CD4-positive, alpha-beta T cell (primary cell): ENCODE measurements at regions of chr16 and their contacts with region 1.

Region 1: DNA sequence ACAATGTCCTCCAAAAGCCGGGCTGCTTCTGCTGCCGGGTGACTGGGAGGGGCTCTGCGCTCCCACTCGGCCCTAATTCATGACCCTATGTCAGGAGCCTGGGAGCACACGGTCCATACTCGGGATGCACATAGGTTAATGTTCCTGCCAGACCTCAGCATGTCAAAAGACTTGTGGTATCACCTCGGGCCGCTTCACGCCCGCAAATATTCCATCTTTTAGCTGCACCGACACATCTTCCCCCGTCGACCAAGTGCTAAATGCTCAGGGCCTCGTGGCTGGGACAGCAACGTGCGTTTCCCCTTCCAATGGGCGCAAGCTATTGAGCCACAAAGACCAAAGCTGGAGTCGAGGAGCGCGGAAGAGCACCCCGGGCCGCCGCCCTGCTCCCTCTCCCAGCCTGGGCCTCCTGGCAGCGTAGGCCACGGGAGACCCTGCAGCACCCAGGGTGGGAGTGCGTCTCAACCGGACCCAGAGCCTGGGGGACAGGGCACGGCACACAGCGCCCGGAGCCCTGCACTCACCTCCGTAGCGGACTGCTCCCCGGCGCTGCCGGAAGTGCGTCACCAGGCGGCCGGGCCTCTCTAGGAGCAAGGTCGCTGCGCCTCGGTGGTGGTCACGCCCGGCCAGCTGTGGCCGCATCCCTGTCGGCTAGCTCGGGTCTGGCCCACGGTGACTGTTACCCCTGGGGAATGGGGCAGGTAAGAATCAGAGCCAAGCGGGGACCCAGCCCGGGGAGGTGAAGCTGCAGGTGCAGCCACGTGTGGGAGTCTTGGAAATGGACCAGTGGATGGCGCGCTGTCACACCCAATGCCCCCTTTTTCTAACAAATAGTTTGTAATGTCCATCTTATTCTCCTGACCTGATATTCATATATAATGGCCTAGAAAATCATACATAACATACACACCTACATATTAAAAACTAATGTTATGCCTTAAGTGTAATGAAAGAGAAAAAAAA is at the start of gene ZNF23:
- DNase-seq: peak; percentile 53 to 87 (median 72)
- ATAC-seq: peak; percentile 95
- H3K4me3 ChIP-seq: peak within 1 kb of the TSS; percentile 96
- H3K4me3 Mint-ChIP-seq: peak within 1 kb of the TSS; percentile 94
- H3K27ac ChIP-seq: peak within 1 kb of the TSS; percentile 68 to 79
- H3K27ac Mint-ChIP-seq: peak within 1 kb of the TSS; percentile 85
- H3K4me1 ChIP-seq: peaks cover 11% of the 10 kb centered on the region
- H3K4me1 Mint-ChIP-seq: peaks cover 34% of the 10 kb centered on the region
- H3K27me3 ChIP-seq: no peaks in the 10 kb centered on the region
- H3K27me3 Mint-ChIP-seq: no peaks in the 10 kb centered on the region
- CTCF ChIP-seq: peak; percentile 54
- total RNA-seq, gene ZNF23: 7.0 to 8.4 TPM

Region 2: DNA sequence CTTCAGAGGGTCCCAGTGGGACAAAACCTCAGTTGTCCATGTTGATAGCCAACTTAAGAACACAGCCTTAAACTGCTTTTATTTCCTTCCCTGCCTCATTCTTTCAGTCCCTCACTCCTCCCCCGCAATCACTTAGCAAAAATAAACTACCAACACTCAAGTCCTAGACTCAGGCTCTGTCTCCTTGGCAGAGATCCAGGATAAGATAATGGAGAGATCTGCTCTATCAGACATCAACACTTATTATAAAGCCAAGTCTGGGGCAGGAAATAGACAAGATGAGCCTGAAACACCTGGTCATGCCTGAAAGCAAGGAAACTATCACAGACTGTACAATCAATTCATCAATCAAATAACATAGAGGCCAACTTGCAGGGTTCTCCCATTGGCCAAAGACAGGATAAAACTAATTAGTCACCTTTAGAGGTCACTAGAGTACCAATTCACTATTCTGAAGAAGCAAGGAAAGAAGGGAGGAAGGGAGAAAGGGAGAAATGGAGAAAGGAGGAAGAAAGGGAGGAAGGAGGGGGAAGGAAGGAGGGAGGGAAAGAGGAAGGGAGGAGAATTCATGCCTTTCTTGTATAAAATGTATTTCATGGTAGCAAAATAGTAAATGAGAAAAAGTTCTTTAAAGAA is 247.1 kb before region 1 on chr16:
- CTCF ChIA-PET with region 1: no interaction called
- POLR2A ChIA-PET with region 1: no interaction called
- intact Hi-C with region 1: no loop called
- DNase-seq: peak in 2 of 14 experiments; percentile 1 to 6
- ATAC-seq: no peak
- H3K4me3 ChIP-seq: no peak overlapping the region
- H3K4me3 Mint-ChIP-seq: no peak overlapping the region
- H3K27ac ChIP-seq: no peak overlapping the region
- H3K27ac Mint-ChIP-seq: no peak overlapping the region
- H3K4me1 ChIP-seq: no peaks in the 10 kb centered on the region
- H3K4me1 Mint-ChIP-seq: no peaks in the 10 kb centered on the region
- H3K27me3 ChIP-seq: no peaks in the 10 kb centered on the region
- H3K27me3 Mint-ChIP-seq: peaks cover 45% of the 10 kb centered on the region
- CTCF ChIP-seq: no peak

Region 3: DNA sequence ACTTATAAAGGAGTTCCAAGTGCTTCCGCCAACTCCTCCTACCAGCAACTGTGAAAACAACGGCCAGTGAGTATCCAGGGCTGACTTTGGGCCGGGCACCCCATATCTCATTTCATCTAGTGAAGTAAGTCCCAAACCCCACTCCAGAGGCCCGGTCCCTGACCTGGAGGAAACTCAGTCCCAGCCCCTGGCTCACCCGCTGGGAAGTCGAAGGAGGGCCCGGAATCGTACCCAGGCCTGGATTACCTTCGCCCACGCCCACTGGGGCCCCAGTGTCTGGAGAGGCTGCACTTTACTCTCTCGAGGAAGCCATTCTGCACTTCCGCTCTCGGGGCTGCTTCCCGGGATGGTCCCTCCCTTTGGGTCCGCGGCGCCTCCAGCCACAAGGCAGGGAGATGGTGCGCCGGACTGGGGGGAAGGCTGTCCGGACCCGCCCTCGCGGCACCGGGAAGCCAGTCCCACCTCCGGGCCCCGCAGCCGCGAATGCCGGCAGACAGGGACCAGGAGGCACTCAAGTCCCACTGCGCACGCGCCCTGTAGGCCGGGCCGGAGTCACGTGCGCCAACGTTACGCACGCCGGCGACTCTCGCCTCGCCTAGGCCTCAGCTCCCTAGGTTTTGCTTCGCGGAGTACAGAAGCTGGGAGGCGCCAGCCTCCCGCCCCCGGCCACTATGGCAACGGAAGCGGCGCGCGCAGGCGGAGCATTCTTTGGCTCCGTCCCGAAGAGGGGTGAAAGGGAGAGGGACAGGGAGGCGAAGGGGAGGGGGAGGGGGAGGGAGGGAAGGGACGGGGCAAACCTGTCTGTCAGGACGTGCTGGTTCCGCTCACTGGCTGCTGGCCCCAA is 172.9 kb before region 1 on chr16 and contains the start of gene CMTR2:
- CTCF ChIA-PET with region 1: no interaction called
- POLR2A ChIA-PET with region 1: no interaction called
- intact Hi-C with region 1: loop called in 1 of 2 experiments (anchors 5 kb)
- DNase-seq: peak; percentile 71 to 95 (median 83)
- ATAC-seq: peak; percentile 92
- H3K4me3 ChIP-seq: peak within 1 kb of the TSS; percentile 94
- H3K4me3 Mint-ChIP-seq: peak within 1 kb of the TSS; percentile 91
- H3K27ac ChIP-seq: peak within 1 kb of the TSS; percentile 80 to 90
- H3K27ac Mint-ChIP-seq: peak within 1 kb of the TSS; percentile 81
- H3K4me1 ChIP-seq: peaks cover 19% of the 10 kb centered on the region
- H3K4me1 Mint-ChIP-seq: peaks cover 31% of the 10 kb centered on the region
- H3K27me3 ChIP-seq: peaks cover 5 to 17% of the 10 kb centered on the region in 2 experiments
- H3K27me3 Mint-ChIP-seq: peaks cover 26% of the 10 kb centered on the region
- CTCF ChIP-seq: no peak
- total RNA-seq, gene CMTR2: 5.9 to 6.6 TPM

Region 4: DNA sequence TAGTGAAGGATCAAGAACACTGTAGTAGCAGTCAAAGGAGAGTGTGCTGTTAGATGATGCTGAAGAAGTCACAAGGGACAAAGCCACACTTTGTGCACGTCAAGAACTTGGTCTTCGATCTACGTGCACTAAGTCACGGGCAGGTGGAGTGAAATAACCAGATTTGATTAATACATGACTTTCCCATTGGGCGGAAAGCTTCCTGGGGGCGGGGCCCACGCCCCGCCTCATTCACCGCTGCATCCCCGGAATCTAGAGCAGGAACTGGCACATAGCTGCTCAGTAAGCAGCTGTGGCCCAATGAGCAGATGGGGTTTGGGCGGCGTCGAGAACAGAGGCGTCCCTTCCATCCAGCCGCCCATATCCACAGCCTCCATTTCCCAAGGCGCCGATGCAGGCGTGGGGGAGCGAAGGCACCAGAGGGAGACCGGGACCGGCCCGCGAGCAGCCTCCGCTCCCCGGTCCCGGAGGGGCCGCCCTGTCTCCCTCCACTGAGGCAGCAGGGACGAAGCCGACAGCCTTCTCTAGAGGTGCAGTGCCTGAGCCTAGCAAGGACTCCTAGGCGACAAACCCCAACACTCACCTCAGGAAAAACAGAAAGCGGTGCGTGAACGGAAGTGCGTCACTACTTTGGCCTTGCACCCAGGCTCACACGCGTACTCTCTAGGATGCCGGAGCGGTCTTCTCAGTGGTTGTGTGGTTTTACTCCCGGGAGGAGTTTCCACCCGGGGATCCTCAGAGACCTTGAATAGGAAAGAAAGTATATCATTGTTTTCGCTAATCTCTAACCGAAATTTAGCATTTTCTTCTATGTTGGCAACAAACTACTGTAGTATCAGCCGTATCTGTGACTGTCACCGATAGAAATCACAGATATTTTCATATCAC is 22.3 kb after region 1 on chr16:
- CTCF ChIA-PET with region 1: interaction called, 5 read pairs
- POLR2A ChIA-PET with region 1: interaction called, 37 read pairs
- intact Hi-C with region 1: loop called (anchors 1 kb)
- DNase-seq: peak; percentile 64 to 95 (median 76)
- ATAC-seq: peak; percentile 84
- H3K4me3 ChIP-seq: peak overlapping the region; percentile 94
- H3K4me3 Mint-ChIP-seq: peak overlapping the region; percentile 85
- H3K27ac ChIP-seq: peak overlapping the region; percentile 93 to 99
- H3K27ac Mint-ChIP-seq: peak overlapping the region; percentile 89
- H3K4me1 ChIP-seq: peaks cover 14% of the 10 kb centered on the region
- H3K4me1 Mint-ChIP-seq: peaks cover 15% of the 10 kb centered on the region
- H3K27me3 ChIP-seq: no peaks in the 10 kb centered on the region
- H3K27me3 Mint-ChIP-seq: no peaks in the 10 kb centered on the region
- CTCF ChIP-seq: no peak

Region 5: GRCh38 chr16:71499775-71500364 is 37.9 kb after region 1 on chr16:
- CTCF ChIA-PET with region 1: no interaction called
- POLR2A ChIA-PET with region 1: no interaction called
- intact Hi-C with region 1: loop called in 1 of 2 experiments (anchors 5 kb)
- DNase-seq: peak in 13 of 14 experiments; percentile 10 to 79 (median 33)
- ATAC-seq: peak; percentile 78
- H3K4me3 ChIP-seq: no peak overlapping the region
- H3K4me3 Mint-ChIP-seq: no peak overlapping the region
- H3K27ac ChIP-seq: no peak overlapping the region
- H3K27ac Mint-ChIP-seq: no peak overlapping the region
- H3K4me1 ChIP-seq: no peaks in the 10 kb centered on the region
- H3K4me1 Mint-ChIP-seq: no peaks in the 10 kb centered on the region
- H3K27me3 ChIP-seq: no peaks in the 10 kb centered on the region
- H3K27me3 Mint-ChIP-seq: peaks cover 19% of the 10 kb centered on the region
- CTCF ChIP-seq: peak; percentile 79

Region 6: DNA sequence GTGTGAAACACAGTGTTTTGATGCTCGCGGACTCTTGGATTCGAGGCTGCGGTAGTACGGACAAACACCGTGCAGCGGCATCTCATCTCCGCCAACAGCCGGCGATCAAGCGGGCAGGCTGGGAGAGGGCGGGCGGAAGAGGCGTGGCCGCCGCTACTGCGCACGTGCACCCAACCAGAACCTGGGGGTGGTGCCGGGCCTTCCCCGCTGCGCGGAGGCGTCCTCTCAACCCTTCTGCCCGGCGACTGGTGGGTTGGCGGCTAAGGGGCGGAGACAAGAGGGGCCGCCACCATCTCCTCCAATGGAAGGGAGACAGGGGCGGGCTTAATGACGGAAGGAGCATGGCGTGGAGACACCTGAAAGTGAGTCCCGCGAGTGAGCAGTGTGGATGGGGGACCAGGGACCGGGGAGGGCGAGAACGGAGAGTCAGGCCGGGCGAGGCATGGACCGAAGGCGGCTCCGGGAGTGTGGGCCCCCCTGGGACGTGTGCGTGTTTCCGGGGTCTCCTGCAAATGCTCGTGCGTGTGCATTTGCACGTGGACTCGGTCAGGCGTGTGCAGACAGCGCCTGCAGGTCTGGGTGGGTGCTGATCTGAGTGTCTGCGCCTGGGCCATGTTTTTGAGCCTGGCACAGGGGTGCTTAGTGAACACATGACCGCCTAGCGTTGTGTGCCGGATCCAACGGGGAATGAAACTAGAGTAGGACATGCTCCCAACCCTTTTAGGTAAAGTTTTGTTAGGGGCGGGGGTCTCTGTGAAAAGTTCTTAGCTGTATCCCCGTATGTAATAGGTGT is 546.7 kb after region 1 on chr16 and contains the start of gene DHODH:
- CTCF ChIA-PET with region 1: no interaction called
- POLR2A ChIA-PET with region 1: no interaction called
- intact Hi-C with region 1: loop called in 1 of 2 experiments (anchors 5 kb)
- DNase-seq: peak; percentile 94 to 99 (median 97)
- ATAC-seq: peak; percentile 99
- H3K4me3 ChIP-seq: peak within 1 kb of the TSS; percentile 99
- H3K4me3 Mint-ChIP-seq: peak within 1 kb of the TSS; percentile 96
- H3K27ac ChIP-seq: peak within 1 kb of the TSS; percentile 29 to 58
- H3K27ac Mint-ChIP-seq: peak within 1 kb of the TSS; percentile 73
- H3K4me1 ChIP-seq: peaks cover 19% of the 10 kb centered on the region
- H3K4me1 Mint-ChIP-seq: peaks cover 12% of the 10 kb centered on the region
- H3K27me3 ChIP-seq: no peaks in the 10 kb centered on the region
- H3K27me3 Mint-ChIP-seq: no peaks in the 10 kb centered on the region
- CTCF ChIP-seq: no peak
- total RNA-seq, gene DHODH: 2.5 to 2.7 TPM